ENCODE measurements at regions of chr15 and their contacts with region 1.

Region 1: DNA sequence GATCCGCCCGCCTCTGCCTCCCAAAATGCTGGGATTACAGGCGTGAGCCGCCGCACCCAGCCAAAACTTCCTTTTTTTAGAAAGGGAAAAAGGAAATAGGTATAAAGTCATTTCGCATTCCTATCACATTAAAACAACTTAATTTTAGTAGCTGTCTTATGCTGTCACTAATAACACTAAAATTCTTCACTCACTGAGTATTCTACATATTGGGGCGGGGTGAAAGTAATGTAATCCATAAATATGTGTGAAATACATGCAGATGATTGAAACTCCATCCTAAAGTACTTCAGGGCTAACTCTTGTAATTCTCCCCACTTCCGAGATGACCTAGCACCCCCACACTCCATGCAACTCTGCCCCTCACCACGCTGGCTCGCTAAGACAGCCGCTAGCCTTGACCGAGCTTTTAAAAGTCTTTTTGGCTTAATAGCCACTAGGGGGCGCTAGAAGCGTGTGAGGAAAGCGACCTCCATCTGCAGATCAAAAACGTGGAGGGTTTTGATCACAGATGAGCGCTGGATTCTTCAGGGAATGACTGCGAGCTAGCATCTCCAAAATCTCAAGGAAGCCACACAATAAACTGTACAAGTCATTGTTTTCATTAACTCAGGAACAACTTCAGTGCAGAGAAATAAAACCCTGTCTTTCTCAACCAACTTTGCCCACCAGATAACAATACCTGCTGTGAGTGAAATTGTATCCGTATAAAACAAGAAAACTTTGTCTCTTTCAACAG is 129.3 kb upstream of the IGF1R start:
- DNase-seq: peak; percentile 17 to 62
- H3K4me3 ChIP-seq: no peak overlapping the region
- H3K27ac ChIP-seq: no peak overlapping the region
- H3K4me1 ChIP-seq: no peaks in the 10 kb centered on the region; a peak in 1 of 7 replicates
- H3K27me3 ChIP-seq: no peaks in the 10 kb centered on the region
- CTCF ChIP-seq: peak; percentile 47 to 88 (median 81)
- EP300 ChIP-seq: no peak
- POLR2A ChIP-seq: no peak
- RAD21 ChIP-seq: peak; percentile 90 to 94

Region 2: GRCh38 chr15:98286831-98287230 is 232.2 kb before region 1 on chr15:
- CTCF ChIA-PET with region 1: no interaction called
- POLR2A ChIA-PET with region 1: no interaction called
- DNase-seq: no peak
- H3K4me3 ChIP-seq: no peak overlapping the region
- H3K27ac ChIP-seq: no peak overlapping the region
- H3K4me1 ChIP-seq: no peaks in the 10 kb centered on the region
- H3K27me3 ChIP-seq: no peaks in the 10 kb centered on the region
- CTCF ChIP-seq: no peak
- EP300 ChIP-seq: no peak
- POLR2A ChIP-seq: no peak
- RAD21 ChIP-seq: no peak

Region 3: DNA sequence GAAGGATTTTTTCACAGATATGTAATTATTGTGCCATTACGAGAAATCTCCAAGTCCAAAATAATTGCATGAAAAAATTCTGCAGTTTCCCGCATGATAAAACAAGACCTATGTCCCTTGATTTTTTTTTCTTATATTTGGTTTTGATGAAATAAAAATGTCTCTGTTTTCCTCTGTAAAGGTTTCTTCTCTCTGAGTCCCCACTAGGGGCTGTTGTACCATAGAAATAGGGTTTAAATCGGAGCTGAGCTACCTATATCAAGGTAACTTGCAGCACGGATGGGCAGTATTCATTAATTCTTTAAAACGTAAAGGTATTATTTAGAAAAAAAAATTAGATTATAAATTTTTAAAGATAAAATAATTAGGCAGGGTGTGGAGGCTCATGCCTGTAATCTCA is 62.7 kb after region 1 on chr15:
- CTCF ChIA-PET with region 1: interaction called, 13 read pairs
- POLR2A ChIA-PET with region 1: no interaction called
- DNase-seq: no peak
- H3K4me3 ChIP-seq: no peak overlapping the region
- H3K27ac ChIP-seq: no peak overlapping the region
- H3K4me1 ChIP-seq: peaks cover 0 to 5% (median 2%) of the 10 kb centered on the region in 4 experiments; a peak in 4 of 7 replicates
- H3K27me3 ChIP-seq: no peaks in the 10 kb centered on the region
- CTCF ChIP-seq: peak in 2 of 3 experiments; percentile 23 to 34; a peak in 2 of 4 replicates
- EP300 ChIP-seq: no peak
- POLR2A ChIP-seq: no peak
- RAD21 ChIP-seq: peak; percentile 45 to 52

Region 4: DNA sequence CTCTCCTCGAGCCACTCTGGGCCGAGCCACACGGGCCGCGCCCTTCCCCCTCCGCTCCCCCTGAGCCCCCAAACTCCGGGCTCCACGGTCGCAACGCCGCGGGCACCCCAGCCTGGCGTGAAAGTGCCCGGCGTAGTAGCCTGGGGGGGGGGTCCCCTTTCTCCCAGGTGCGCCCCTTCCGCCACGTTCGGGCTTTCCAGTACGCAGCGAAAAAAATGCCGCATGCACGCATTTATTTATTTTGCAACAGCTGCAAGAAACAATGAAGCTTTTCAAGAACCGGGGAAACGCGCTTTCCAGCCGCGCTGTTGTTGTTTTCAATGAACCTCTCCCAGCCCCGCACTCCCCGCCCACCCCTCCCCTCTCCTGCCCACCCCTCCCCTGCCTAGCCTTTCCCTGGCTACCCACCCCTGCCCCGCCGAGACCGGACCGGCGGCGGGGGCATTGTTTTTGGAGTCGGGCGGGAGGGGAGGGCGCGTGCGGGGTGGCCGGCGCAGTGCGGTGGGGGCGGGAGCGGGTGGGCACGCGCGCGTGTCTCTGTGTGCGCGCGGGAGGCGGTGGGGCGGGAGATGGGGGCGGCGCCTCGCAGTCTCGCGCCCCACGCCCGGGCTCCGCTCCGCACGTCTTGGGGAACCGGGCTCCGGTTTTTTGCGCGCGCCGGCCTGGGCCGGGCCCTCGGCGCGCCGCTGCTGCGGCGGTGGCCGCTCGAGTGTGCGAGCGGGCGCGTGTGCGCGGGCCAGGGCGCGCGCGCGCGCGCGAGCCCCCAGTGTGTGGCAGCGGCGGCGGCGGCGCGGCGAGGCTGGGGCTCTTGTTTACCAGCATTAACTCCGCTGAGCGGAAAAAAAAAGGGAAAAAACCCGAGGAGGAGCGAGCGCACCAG is 129.0 kb after region 1 on chr15 and contains the start of gene IGF1R:
- CTCF ChIA-PET with region 1: interaction called, 100 read pairs
- POLR2A ChIA-PET with region 1: interaction called, 4 read pairs
- DNase-seq: peak in 1 of 2 experiments; percentile 89
- H3K4me3 ChIP-seq: peak within 1 kb of the TSS; percentile 64 to 89 (median 83)
- H3K27ac ChIP-seq: peak within 1 kb of the TSS; percentile 85
- H3K4me1 ChIP-seq: peaks cover 1 to 6% (median 4%) of the 10 kb centered on the region in 4 experiments; a peak in 3 of 7 replicates
- H3K27me3 ChIP-seq: no peaks in the 10 kb centered on the region
- CTCF ChIP-seq: no peak
- EP300 ChIP-seq: no peak
- POLR2A ChIP-seq: no peak
- RAD21 ChIP-seq: no peak
- total RNA-seq, gene IGF1R: 106 and 109 TPM in 2 replicates

Region 5: DNA sequence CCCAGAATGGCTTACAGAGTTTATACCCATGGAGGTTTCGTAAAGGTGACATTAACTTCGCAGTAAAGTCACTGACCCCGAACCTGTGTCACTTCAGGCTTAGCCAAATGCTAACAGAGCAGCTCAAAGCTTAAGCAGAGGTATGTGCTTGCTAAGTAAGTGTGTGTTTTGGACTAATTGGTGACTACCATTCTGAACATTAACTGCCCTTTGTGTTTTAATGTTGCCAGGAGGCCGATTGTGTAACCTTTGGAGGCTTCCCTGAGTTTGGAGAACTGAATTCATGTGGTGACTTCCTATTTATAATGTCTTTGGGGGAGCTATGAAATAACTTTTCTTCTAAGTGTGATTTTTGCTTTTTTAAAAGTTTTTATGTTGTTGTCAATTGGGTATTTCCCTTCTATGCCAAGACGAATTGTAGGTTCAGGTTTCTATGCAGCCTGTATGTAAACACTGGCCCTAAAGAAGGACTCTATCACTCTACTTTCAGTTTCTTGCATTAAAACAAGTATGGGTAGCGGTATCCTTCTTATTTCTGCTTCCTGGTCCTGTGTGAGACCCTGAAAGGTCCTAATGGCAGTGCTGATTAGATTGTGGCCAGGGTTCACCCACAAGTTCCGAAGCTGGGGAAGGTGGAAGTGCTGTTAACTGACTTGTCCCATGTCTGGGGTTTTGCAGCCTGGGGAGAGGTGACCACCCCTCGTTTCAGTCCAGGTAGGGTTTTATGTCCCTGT is 215.6 kb after region 1 on chr15:
- CTCF ChIA-PET with region 1: no interaction called
- POLR2A ChIA-PET with region 1: no interaction called
- DNase-seq: no peak
- H3K4me3 ChIP-seq: no peak overlapping the region
- H3K27ac ChIP-seq: no peak overlapping the region
- H3K4me1 ChIP-seq: peaks cover 2 to 39% (median 20%) of the 10 kb centered on the region in 4 experiments
- H3K27me3 ChIP-seq: no peaks in the 10 kb centered on the region
- CTCF ChIP-seq: no peak
- EP300 ChIP-seq: no peak
- POLR2A ChIP-seq: no peak
- RAD21 ChIP-seq: no peak

Region 6: DNA sequence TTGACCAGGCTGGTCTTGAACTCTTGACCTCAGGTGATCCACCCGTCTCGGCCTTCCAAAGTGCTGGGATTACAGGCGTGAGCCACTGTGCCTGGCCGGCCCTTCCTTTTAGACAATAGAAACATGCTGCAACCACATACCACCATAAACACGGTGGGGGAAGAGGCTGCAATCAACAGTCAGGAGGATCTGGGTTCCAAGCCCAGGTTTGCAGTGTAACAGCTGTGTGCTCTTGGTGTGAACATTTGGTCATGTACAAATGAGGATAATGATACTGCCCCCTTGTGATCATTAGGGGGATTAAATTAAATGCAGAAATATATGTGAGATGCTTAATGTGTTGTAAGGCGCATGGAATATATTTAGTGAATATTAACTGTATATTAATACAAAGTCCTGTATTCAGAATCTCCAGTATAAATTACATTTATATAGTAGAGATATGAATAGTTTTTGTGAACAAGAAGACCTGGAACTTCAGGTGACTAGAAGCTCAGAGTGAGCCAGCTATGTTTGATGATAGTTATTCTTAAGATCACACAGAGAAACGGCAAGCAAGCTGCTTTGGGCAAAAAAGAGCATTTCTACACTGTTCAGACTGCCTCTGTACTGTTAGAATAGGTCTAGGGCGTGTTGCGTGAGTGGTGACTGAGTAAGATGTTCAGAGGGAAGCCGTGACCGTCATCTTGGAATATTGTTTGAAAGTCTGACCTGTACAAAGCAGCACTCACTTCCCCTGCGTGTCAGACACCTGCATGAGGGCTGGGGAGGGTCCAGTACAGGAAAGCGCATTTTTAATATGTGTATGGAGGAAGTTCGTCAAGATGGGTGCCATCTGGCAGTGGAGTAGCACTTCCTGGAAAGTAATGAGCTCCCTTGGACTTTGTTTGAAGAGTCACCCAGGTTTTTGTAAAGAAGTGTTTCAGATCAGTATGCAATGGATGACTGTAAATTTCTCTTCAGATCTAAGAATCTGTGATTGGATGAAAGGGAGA is 362.8 kb after region 1 on chr15:
- CTCF ChIA-PET with region 1: interaction called, 16 read pairs
- POLR2A ChIA-PET with region 1: no interaction called
- DNase-seq: no peak
- H3K4me3 ChIP-seq: no peak overlapping the region
- H3K27ac ChIP-seq: no peak overlapping the region
- H3K4me1 ChIP-seq: peaks cover 0 to 7% (median 3%) of the 10 kb centered on the region in 4 experiments; a peak in 5 of 7 replicates
- H3K27me3 ChIP-seq: no peaks in the 10 kb centered on the region
- CTCF ChIP-seq: peak in 2 of 3 experiments; percentile 32 to 56; a peak in 2 of 4 replicates
- EP300 ChIP-seq: no peak
- POLR2A ChIP-seq: no peak
- RAD21 ChIP-seq: peak; percentile 54 to 60